ENCODE measurements at regions of chr2 and their contacts with region 1.

Region 1: GRCh38 chr2:38581193-38582147 is 21.3 kb downstream of the HNRNPLL start:
- DNase-seq: no peak
- H3K4me3 ChIP-seq: no peak overlapping the region
- H3K27ac ChIP-seq: no peak overlapping the region
- H3K4me1 ChIP-seq: peaks cover 0 to 13% (median 2%) of the 10 kb centered on the region in 4 experiments; a peak in 4 of 7 replicates
- H3K27me3 ChIP-seq: no peaks in the 10 kb centered on the region
- CTCF ChIP-seq: peak in 2 of 3 experiments; percentile 57 to 68; a peak in 3 of 4 replicates
- EP300 ChIP-seq: no peak
- POLR2A ChIP-seq: peak in 1 of 2 experiments; percentile 4; a peak in 1 of 3 replicates
- RAD21 ChIP-seq: peak; percentile 75 to 78

Region 2: DNA sequence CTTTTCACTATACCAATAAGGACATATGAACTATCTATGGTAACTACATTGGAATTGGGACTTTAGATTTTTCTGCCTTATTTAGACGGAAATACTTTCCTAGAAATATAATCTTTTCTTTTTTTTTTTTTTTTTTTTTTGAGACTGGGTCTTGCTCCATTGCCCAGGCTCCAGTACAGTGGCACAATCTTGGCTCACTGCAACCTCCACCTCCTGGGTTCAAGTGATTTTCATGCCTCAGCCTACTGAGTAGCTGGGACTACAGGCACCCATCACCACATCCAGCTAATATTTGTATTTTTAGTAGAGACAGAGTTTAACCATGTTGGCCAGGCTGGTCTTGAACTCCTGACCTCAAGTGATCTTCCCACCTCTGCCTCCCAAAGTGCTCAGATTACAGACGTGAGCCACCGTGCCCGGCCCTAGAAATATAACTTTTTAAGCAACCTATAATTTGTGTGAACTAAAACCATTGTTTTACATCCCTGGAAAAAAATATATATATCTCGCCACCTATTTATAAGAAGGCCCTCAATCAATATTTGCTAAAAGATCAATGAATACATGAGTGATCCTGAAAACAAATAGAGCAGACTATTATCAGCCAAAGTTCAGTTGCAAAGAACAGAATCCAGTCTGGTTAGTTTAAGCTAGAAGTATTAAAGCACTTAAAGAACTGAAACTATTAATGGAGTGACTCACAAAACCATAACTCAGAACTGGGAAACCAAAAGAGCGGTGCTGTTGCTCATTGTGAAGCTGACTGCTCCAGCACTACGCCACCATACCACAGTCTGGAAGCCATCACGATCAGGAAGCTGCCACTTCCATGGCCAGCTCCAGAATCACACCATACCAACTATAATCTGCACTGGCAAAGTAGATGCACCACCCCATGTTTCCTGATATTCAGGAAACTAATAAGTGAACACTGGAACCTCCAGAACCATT is 29.7 kb after region 1 on chr2:
- CTCF ChIA-PET with region 1: interaction called, 119 read pairs
- POLR2A ChIA-PET with region 1: interaction called, 4 read pairs
- DNase-seq: no peak
- H3K4me3 ChIP-seq: no peak overlapping the region
- H3K27ac ChIP-seq: no peak overlapping the region
- H3K4me1 ChIP-seq: peaks cover 0 to 4% (median 0%) of the 10 kb centered on the region in 4 experiments; a peak in 1 of 7 replicates
- H3K27me3 ChIP-seq: no peaks in the 10 kb centered on the region
- CTCF ChIP-seq: no peak
- EP300 ChIP-seq: no peak
- POLR2A ChIP-seq: no peak
- RAD21 ChIP-seq: no peak

Region 3: GRCh38 chr2:38722271-38723061 is 141.0 kb after region 1 on chr2:
- CTCF ChIA-PET with region 1: interaction called, 113 read pairs
- POLR2A ChIA-PET with region 1: no interaction called
- DNase-seq: no peak
- H3K4me3 ChIP-seq: no peak overlapping the region
- H3K27ac ChIP-seq: no peak overlapping the region
- H3K4me1 ChIP-seq: no peaks in the 10 kb centered on the region
- H3K27me3 ChIP-seq: no peaks in the 10 kb centered on the region
- CTCF ChIP-seq: no peak
- EP300 ChIP-seq: no peak
- POLR2A ChIP-seq: no peak
- RAD21 ChIP-seq: no peak

Region 4: DNA sequence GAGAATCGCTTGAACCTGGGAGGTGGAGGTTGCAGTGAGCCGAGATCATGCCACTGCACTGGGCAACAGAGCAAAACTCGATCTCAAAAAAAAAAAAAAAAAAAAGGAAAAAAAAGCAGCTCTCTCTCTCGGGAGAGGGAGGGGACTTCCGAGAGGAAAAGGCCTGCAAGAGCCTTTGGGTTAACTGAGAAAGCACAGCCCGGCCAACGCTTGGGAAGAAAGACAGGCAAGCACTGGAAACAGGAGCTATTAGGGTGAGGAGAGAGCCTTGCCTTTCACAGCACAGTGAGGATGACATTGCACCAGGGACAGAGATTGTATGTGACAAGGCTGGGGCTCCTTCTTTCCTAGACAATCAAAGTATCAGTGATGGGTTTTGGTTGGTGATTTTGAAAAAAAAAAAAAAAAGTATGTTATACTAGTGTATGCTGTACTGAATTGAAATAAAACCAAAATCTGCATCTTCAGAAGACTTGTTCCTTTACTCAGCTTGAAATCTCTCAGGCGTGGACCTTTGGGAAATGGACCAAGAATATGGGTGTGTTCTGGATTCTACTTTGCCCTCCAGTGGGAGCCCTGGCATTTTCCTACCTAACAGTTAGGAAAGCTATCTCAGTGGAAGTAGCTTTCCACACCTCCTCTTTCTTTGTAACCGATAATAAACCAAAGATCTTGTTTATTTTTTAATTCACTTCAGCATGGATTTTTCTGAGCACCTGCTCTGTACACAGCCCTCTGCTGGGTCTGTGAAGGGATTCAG is 153.0 kb after region 1 on chr2:
- CTCF ChIA-PET with region 1: interaction called, 113 read pairs
- POLR2A ChIA-PET with region 1: interaction called, 6 read pairs
- DNase-seq: no peak
- H3K4me3 ChIP-seq: no peak overlapping the region
- H3K27ac ChIP-seq: no peak overlapping the region
- H3K4me1 ChIP-seq: peaks cover 0 to 7% (median 1%) of the 10 kb centered on the region in 4 experiments; a peak in 4 of 7 replicates
- H3K27me3 ChIP-seq: no peaks in the 10 kb centered on the region
- CTCF ChIP-seq: no peak
- EP300 ChIP-seq: no peak
- POLR2A ChIP-seq: no peak
- RAD21 ChIP-seq: no peak

Region 5: GRCh38 chr2:38740851-38741731 is 159.6 kb after region 1 on chr2:
- CTCF ChIA-PET with region 1: interaction called, 56 read pairs
- POLR2A ChIA-PET with region 1: interaction called, 28 read pairs
- DNase-seq: no peak
- H3K4me3 ChIP-seq: no peak overlapping the region
- H3K27ac ChIP-seq: no peak overlapping the region
- H3K4me1 ChIP-seq: peaks cover 0 to 7% (median 1%) of the 10 kb centered on the region in 4 experiments; a peak in 4 of 7 replicates
- H3K27me3 ChIP-seq: no peaks in the 10 kb centered on the region
- CTCF ChIP-seq: peak in 2 of 3 experiments; percentile 11 to 17; a peak in 2 of 4 replicates
- EP300 ChIP-seq: no peak
- POLR2A ChIP-seq: 0 out of 3 replicates have a peak, but pooled peaks of 1 of the 2 experiments have one; percentile 60
- RAD21 ChIP-seq: peak; percentile 33 to 40

Measured in H1 (cell line).